Calu3 (cell line): ENCODE measurements at regions of chrX and their contacts with region 1.

Region 1: DNA sequence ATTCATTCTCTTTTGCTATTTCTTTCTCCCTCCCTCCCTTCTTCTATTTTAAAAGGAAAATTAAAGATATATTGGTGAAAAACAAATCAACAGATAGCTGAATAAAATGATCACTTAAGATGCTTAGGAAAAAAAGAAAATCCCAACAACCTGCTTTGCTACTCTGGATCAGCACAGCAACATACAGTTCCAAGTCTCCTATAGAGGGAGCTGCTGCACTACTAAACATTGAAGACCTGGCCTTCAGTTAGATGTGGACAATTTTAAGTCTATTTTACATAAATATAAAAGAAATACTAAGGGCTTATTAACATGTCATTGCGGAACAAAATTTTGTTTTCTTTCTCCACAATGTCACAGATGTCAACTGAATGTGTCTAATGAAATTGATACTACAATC is 226.4 kb downstream of the MAGEB5 start:
- DNase-seq: peak; percentile 23
- H3K4me3 Mint-ChIP-seq: no peak overlapping the region
- H3K27ac Mint-ChIP-seq: no peak overlapping the region
- H3K4me1 Mint-ChIP-seq: peaks cover 9% of the 10 kb centered on the region
- H3K27me3 Mint-ChIP-seq: no peaks in the 10 kb centered on the region
- CTCF ChIP-seq: peak; percentile 20

Region 2: GRCh38 chrX:26295425-26295824 is 146.9 kb before region 1 on chrX:
- CTCF ChIA-PET with region 1: no interaction called
- intact Hi-C with region 1: loop called (anchors 10 kb)
- DNase-seq: no peak
- H3K4me3 Mint-ChIP-seq: no peak overlapping the region
- H3K27ac Mint-ChIP-seq: no peak overlapping the region
- H3K4me1 Mint-ChIP-seq: peaks cover 8% of the 10 kb centered on the region
- H3K27me3 Mint-ChIP-seq: no peaks in the 10 kb centered on the region
- CTCF ChIP-seq: no peak

Region 3: GRCh38 chrX:26649534-26649933 is 207.2 kb after region 1 on chrX:
- CTCF ChIA-PET with region 1: no interaction called
- intact Hi-C with region 1: loop called (anchors 10 kb)
- DNase-seq: no peak
- H3K4me3 Mint-ChIP-seq: no peak overlapping the region
- H3K27ac Mint-ChIP-seq: no peak overlapping the region
- H3K4me1 Mint-ChIP-seq: no peaks in the 10 kb centered on the region
- H3K27me3 Mint-ChIP-seq: no peaks in the 10 kb centered on the region
- CTCF ChIP-seq: peak; percentile 46